Activated CD4-positive, alpha-beta T cell treated with anti-CD3 and anti-CD28 coated beads for 36 hours (primary cell): ENCODE measurements at regions of chr2 and their contacts with region 1.

Region 1: GRCh38 chr2:7845332-7845731 is 836.5 kb upstream of the ID2 start:
- DNase-seq: no peak
- ATAC-seq: no peak
- H3K4me3 Mint-ChIP-seq: no peak overlapping the region
- H3K27ac Mint-ChIP-seq: no peak overlapping the region
- H3K4me1 Mint-ChIP-seq: peaks cover 40% of the 10 kb centered on the region
- H3K27me3 Mint-ChIP-seq: peaks cover 6% of the 10 kb centered on the region

Region 2: DNA sequence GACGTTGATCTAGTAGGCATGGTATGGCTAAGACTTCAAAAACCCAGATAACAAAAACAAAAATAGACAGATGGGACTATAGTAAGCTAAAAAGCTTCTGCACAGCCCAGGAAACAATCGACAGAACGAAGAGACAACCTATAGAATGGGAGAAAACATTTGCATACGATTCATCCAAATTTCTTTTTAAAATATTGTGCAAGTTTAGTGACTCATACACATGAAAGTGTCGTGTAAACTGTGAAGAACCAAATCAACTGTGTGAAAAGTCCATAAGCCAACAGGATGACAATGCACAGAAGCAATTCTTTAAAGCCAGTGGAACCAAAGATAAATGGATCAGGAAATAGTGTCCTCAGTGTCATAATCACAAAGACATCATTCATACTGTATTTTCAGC is 257.0 kb before region 1 on chr2:
- CTCF ChIA-PET with region 1: no interaction called
- POLR2A ChIA-PET with region 1: no interaction called
- intact Hi-C with region 1: loop called in 1 of 2 experiments (anchors 5 kb)
- DNase-seq: no peak
- ATAC-seq: peak; percentile 71
- H3K4me3 Mint-ChIP-seq: no peak overlapping the region
- H3K27ac Mint-ChIP-seq: peak overlapping the region; percentile 71
- H3K4me1 Mint-ChIP-seq: peaks cover 41% of the 10 kb centered on the region
- H3K27me3 Mint-ChIP-seq: no peaks in the 10 kb centered on the region

Region 3: GRCh38 chr2:7930800-7931635 is 85.7 kb after region 1 on chr2:
- CTCF ChIA-PET with region 1: interaction called, 3 read pairs
- POLR2A ChIA-PET with region 1: interaction called, 4 read pairs
- intact Hi-C with region 1: loop called (anchors 1 kb)
- DNase-seq: peak; percentile 56
- ATAC-seq: peak; percentile 80
- H3K4me3 Mint-ChIP-seq: peak overlapping the region; percentile 0
- H3K27ac Mint-ChIP-seq: peak overlapping the region; percentile 93
- H3K4me1 Mint-ChIP-seq: peaks cover 33% of the 10 kb centered on the region
- H3K27me3 Mint-ChIP-seq: no peaks in the 10 kb centered on the region

Region 4: GRCh38 chr2:8152392-8153257 is 307.3 kb after region 1 on chr2:
- CTCF ChIA-PET with region 1: interaction called, 5 read pairs
- POLR2A ChIA-PET with region 1: no interaction called
- intact Hi-C with region 1: loop called in 1 of 2 experiments (anchors 2 kb)
- DNase-seq: no peak
- ATAC-seq: no peak
- H3K4me3 Mint-ChIP-seq: no peak overlapping the region
- H3K27ac Mint-ChIP-seq: no peak overlapping the region
- H3K4me1 Mint-ChIP-seq: peaks cover 30% of the 10 kb centered on the region
- H3K27me3 Mint-ChIP-seq: no peaks in the 10 kb centered on the region

Region 5: DNA sequence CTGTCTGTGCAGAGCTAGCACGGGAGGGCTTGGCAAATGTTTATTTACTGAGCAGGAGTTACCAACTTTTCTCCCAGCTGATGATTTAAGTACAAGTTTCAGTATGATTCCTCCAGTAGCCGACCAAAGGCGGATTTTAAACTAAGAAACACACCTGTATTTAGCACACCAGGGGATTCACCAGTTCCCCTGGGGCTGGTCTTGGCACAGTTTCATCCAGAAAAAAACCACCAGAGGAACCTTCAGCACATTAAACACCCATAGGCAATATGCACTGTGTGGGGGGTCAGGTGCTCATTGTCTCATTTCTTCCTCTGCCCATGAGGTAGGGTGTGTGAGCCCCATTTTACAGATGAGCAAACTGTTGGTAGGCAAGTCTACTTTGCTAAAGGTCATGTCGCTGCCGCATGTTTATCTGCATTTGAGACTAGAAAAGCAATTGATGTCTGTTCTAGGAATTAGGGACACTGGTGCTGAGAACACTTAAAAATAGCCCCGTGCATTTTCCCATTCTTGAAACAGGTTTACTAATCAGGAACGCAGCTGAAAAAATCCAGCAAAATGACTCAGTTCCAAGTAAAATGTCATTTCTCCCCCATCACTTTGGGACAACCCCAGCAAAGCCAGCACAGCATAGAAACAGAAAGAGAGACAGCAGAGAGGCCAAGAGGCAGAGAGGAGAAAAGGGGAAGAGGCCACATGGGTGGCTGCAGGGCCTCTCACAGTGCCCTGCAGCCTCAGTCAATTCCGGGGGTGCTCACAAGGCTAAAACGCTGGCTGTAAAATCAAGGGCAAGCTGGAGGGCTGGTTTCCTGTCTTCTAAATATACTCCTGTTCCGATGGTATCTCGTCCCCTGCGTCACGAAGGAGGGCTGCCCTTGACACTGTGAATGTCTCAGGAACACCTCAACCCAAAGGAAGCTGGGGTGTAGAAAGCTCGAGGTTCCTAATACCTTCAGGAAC is 669.7 kb after region 1 on chr2:
- CTCF ChIA-PET with region 1: no interaction called
- POLR2A ChIA-PET with region 1: no interaction called
- intact Hi-C with region 1: loop called in 1 of 2 experiments (anchors 1 kb)
- DNase-seq: peak; percentile 82
- ATAC-seq: peak; percentile 86
- H3K4me3 Mint-ChIP-seq: peak overlapping the region; percentile 46
- H3K27ac Mint-ChIP-seq: peak overlapping the region; percentile 93
- H3K4me1 Mint-ChIP-seq: peaks cover 63% of the 10 kb centered on the region
- H3K27me3 Mint-ChIP-seq: no peaks in the 10 kb centered on the region